ENCODE measurements at regions of chr9 and their contacts with region 1.

Region 1: DNA sequence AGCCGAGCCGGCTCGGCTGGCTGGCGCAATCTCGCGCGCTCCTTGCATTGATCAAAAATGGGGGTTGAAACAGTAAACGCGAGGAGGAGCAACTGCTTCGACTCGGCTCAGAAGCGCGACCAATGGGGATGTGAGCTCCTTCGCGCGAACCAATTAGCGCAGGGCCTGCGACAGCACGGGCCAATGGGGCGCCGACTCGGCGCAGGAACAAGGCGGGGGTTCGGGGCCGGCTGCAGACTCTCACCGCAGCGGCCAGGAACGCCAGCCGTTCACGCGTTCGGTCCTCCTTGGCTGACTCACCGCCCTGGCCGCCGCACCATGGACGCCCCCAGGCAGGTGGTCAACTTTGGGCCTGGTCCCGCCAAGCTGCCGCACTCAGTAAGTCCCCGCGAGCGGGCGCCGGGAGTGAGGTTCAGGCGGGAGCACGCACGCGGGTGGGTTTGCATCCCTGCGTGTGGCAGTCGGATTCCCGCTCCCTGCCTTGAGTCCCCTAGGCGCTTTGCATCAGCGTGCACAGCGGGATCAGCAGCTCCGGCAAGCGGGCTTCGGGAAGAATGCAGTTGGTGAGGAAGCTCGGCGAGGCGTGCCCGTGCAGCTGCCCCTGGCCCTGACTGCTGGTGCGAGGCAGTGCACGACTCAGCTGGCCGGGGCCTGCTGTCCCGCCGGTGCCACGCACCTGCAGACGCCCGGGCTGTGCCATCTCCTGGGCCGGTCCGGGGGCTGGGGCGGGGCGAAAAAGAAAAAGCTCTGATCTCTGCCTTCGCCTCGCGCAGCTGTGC is at the start of gene PSAT1:
- DNase-seq: peak; percentile 81 to 88
- H3K4me3 ChIP-seq: peak within 1 kb of the TSS; percentile 66
- H3K4me3 Mint-ChIP-seq: peak within 1 kb of the TSS; percentile 77
- H3K27ac Mint-ChIP-seq: peak within 1 kb of the TSS; percentile 90
- H3K4me1 ChIP-seq: no peaks in the 10 kb centered on the region
- H3K4me1 Mint-ChIP-seq: no peaks in the 10 kb centered on the region
- H3K27me3 ChIP-seq: no peaks in the 10 kb centered on the region
- H3K27me3 Mint-ChIP-seq: no peaks in the 10 kb centered on the region
- CTCF ChIP-seq: no peak
- total RNA-seq, gene PSAT1: 93.6 and 112 TPM in 2 replicates

Region 2: DNA sequence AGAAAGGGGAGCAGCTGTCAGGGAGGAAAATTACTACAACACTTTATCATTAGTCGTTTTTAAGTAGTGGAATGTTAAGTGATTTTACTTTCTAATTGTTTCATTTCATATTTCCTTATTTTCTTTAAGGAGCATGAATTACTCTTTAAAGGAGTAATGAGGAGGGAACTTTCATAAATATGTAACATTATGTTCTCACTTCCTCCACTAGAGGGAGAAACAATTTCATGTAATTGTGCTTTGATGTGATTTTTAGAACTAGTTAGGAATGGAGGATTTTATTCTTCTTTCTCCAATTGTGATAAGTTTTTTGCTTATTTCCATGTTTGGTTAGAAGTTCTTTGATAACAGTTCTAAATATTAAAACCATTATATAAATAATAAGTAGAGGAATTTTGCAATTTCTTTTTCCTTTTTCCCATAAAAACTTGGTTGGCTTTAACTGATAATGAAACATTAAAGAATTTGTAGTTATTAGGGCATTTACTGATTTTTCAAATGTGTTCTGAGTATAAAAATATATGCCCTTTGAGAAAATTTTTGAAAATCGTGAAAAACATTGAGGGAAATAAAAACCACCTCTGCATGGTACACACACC is 35.6 kb before region 1 on chr9:
- CTCF ChIA-PET with region 1: no interaction called
- POLR2A ChIA-PET with region 1: no interaction called
- intact Hi-C with region 1: loop called (anchors 5 kb)
- DNase-seq: no peak
- H3K4me3 ChIP-seq: no peak overlapping the region
- H3K4me3 Mint-ChIP-seq: no peak overlapping the region
- H3K27ac Mint-ChIP-seq: no peak overlapping the region
- H3K4me1 ChIP-seq: no peaks in the 10 kb centered on the region
- H3K4me1 Mint-ChIP-seq: no peaks in the 10 kb centered on the region
- H3K27me3 ChIP-seq: no peaks in the 10 kb centered on the region
- H3K27me3 Mint-ChIP-seq: no peaks in the 10 kb centered on the region
- CTCF ChIP-seq: no peak

Region 3: GRCh38 chr9:78311886-78312524 is 14.9 kb after region 1 on chr9:
- CTCF ChIA-PET with region 1: no interaction called
- POLR2A ChIA-PET with region 1: interaction called, 15 read pairs
- intact Hi-C with region 1: no loop called
- DNase-seq: no peak
- H3K4me3 ChIP-seq: no peak overlapping the region
- H3K4me3 Mint-ChIP-seq: no peak overlapping the region
- H3K27ac Mint-ChIP-seq: no peak overlapping the region
- H3K4me1 ChIP-seq: no peaks in the 10 kb centered on the region
- H3K4me1 Mint-ChIP-seq: no peaks in the 10 kb centered on the region
- H3K27me3 ChIP-seq: no peaks in the 10 kb centered on the region
- H3K27me3 Mint-ChIP-seq: no peaks in the 10 kb centered on the region
- CTCF ChIP-seq: no peak

Region 4: GRCh38 chr9:79152306-79152705 is 855.2 kb after region 1 on chr9:
- CTCF ChIA-PET with region 1: no interaction called
- POLR2A ChIA-PET with region 1: no interaction called
- intact Hi-C with region 1: no loop called
- DNase-seq: no peak
- H3K4me3 ChIP-seq: no peak overlapping the region
- H3K4me3 Mint-ChIP-seq: no peak overlapping the region
- H3K27ac Mint-ChIP-seq: no peak overlapping the region
- H3K4me1 ChIP-seq: no peaks in the 10 kb centered on the region
- H3K4me1 Mint-ChIP-seq: no peaks in the 10 kb centered on the region
- H3K27me3 ChIP-seq: no peaks in the 10 kb centered on the region
- H3K27me3 Mint-ChIP-seq: no peaks in the 10 kb centered on the region
- CTCF ChIP-seq: no peak